ENCODE measurements at regions of chr4 and their contacts with region 1.

Region 1: GRCh38 chr4:154551872-154552686 is 1.9 kb upstream of the PLRG1 start:
- DNase-seq: peak; percentile 82
- H3K4me3 Mint-ChIP-seq: no peak overlapping the region
- H3K27ac Mint-ChIP-seq: no peak overlapping the region
- H3K4me1 Mint-ChIP-seq: peaks cover 13% of the 10 kb centered on the region
- H3K27me3 Mint-ChIP-seq: no peaks in the 10 kb centered on the region
- CTCF ChIP-seq: peak; percentile 80

Region 2: GRCh38 chr4:154107337-154107736 is 444.7 kb before region 1 on chr4:
- CTCF ChIA-PET with region 1: no interaction called
- POLR2A ChIA-PET with region 1: no interaction called
- intact Hi-C with region 1: no loop called
- DNase-seq: no peak
- H3K4me3 Mint-ChIP-seq: no peak overlapping the region
- H3K27ac Mint-ChIP-seq: no peak overlapping the region
- H3K4me1 Mint-ChIP-seq: no peaks in the 10 kb centered on the region
- H3K27me3 Mint-ChIP-seq: no peaks in the 10 kb centered on the region
- CTCF ChIP-seq: no peak

Region 3: GRCh38 chr4:154399259-154399974 is 152.7 kb before region 1 on chr4:
- CTCF ChIA-PET with region 1: no interaction called
- POLR2A ChIA-PET with region 1: interaction called, 3 read pairs
- intact Hi-C with region 1: loop called (anchors 1 kb)
- DNase-seq: peak; percentile 54
- H3K4me3 Mint-ChIP-seq: no peak overlapping the region
- H3K27ac Mint-ChIP-seq: no peak overlapping the region
- H3K4me1 Mint-ChIP-seq: peaks cover 9% of the 10 kb centered on the region
- H3K27me3 Mint-ChIP-seq: no peaks in the 10 kb centered on the region
- CTCF ChIP-seq: peak; percentile 46

Region 4: DNA sequence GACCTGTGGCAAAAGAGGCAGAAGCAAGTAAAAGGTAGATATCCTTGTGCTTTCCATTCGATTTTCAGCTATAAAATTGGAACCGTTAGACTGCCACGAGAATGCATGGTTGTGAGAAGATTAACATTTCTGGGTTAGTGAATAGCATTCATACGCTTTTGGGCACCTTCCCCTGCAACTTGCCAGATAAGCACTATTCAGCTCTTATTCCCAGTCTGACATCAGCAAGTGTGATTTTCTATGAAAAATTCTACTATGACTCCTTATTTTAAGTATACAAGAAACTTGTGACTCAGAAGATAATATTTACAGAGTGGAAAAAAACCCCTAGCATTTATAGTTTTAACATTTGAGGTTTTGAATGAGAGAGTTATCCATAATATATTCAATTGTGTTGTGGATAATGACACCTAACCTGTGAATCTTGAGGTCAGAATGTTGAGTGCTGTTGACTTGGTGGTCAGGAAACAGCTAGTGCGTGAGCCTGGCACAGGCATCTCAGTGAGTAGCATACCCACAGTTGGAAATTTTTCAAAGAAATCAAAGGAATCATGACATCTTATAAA is 14.6 kb after region 1 on chr4:
- CTCF ChIA-PET with region 1: interaction called, 10 read pairs
- POLR2A ChIA-PET with region 1: interaction called, 3 read pairs
- intact Hi-C with region 1: no loop called
- DNase-seq: peak; percentile 15
- H3K4me3 Mint-ChIP-seq: no peak overlapping the region
- H3K27ac Mint-ChIP-seq: no peak overlapping the region
- H3K4me1 Mint-ChIP-seq: peaks cover 6% of the 10 kb centered on the region
- H3K27me3 Mint-ChIP-seq: no peaks in the 10 kb centered on the region
- CTCF ChIP-seq: no peak

Region 5: DNA sequence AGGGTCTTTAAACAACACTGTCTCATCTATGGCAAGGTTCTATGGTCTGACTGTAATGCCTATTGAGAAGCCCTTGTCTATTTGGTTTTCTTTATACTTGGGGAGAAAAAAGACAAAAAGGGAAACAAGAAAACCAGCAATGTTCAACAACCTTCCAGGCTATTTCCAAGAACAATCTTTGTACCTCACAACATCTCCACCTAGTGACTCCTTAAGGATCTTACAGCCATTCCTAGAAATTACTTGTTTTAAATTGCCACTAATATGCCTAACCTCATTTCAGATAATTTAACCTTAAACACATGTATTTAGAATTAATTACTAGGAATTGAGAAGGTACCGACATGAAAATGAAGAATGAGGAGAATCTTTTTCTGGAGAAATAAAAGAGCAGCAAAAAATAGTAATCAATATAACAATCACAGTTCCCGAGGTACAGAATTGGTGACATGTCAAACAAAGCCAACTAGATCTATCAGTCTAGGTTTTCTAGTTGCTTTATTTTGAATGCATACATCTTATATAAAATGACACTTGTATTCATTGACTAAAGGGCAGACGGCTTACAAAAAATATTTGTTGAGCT is 227.4 kb after region 1 on chr4:
- CTCF ChIA-PET with region 1: interaction called, 4 read pairs
- POLR2A ChIA-PET with region 1: interaction called, 4 read pairs
- intact Hi-C with region 1: loop called (anchors 1 kb)
- DNase-seq: peak; percentile 57
- H3K4me3 Mint-ChIP-seq: no peak overlapping the region
- H3K27ac Mint-ChIP-seq: no peak overlapping the region
- H3K4me1 Mint-ChIP-seq: no peaks in the 10 kb centered on the region
- H3K27me3 Mint-ChIP-seq: no peaks in the 10 kb centered on the region
- CTCF ChIP-seq: peak; percentile 67

Region 6: DNA sequence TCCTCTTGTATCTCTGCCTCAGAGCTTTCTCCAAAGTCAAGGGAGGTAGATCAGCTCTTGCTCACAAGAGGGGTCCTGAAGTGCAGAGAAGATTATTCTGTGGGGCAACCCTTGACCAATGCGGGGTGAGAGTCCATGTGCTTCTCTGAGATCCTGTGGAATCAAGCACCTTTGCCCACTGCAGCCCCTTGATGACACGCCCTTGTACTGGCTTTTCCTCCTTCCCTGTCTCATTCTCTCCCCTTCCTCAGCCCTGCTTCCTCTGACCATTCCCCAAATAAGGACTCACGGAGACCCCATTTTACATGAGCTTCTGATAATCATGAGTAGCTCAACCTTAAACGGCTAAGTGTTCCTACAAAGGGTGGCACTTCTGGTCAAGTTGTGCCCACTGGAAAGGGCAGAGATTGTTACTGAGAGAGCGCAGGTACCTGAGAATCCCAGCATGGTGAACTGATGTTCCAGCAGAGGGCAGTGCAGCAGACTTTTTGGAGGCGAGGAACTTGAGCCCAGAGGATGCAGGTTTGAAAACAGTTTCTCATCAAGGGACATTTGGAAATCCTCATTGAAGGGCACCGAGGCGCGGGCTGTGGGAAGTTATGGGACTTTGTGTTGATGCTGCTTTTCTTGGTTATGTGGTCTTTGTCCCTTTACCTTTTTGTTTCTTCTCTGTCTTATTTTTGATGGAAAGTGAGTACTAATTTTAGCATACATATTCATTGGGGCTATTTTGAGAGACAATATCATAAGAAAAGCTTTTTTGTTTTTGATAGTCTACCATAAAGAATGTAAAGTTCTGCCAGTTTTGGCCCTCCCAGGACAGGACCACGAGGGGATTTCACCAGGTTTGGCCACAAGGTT is 430.3 kb after region 1 on chr4:
- CTCF ChIA-PET with region 1: no interaction called
- POLR2A ChIA-PET with region 1: no interaction called
- intact Hi-C with region 1: no loop called
- DNase-seq: peak; percentile 82
- H3K4me3 Mint-ChIP-seq: no peak overlapping the region
- H3K27ac Mint-ChIP-seq: peak overlapping the region; percentile 20
- H3K4me1 Mint-ChIP-seq: peaks cover 6% of the 10 kb centered on the region
- H3K27me3 Mint-ChIP-seq: no peaks in the 10 kb centered on the region
- CTCF ChIP-seq: peak; percentile 69

Region 7: GRCh38 chr4:155376387-155377268 is 824.5 kb after region 1 on chr4 and contains the start of gene MAP9:
- CTCF ChIA-PET with region 1: interaction called, 3 read pairs
- POLR2A ChIA-PET with region 1: no interaction called
- intact Hi-C with region 1: loop called (anchors 10 kb)
- DNase-seq: peak; percentile 87
- H3K4me3 Mint-ChIP-seq: peak within 1 kb of the TSS; percentile 81
- H3K27ac Mint-ChIP-seq: peak within 1 kb of the TSS; percentile 80
- H3K4me1 Mint-ChIP-seq: peaks cover 6% of the 10 kb centered on the region
- H3K27me3 Mint-ChIP-seq: no peaks in the 10 kb centered on the region
- CTCF ChIP-seq: no peak
- total RNA-seq, gene MAP9: 13.2 and 14.2 TPM in 2 replicates